ENCODE measurements at regions of chr9 and their contacts with region 1.

Region 1: DNA sequence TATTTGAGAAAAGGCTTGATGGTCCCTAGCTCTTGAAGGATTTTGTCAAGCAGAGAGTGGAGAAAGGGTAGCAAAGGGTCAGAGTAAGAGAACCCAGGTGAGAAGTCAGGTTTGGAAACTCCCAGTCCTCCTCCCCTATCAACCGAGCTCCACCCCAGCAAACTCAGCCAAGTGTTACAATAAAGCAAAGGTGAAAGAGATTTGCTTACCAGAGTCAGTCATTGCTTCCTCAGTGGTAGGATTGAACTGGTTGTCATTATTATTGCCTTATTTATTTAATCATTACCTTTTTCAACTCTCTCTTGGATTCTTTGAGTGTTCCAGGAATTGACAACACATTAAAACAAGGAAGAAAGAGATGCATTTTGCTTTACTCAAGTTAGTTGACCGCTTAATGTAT is 80.5 kb downstream of the RFK start:
- DNase-seq: no peak
- H3K4me3 ChIP-seq: no peak overlapping the region
- H3K27ac ChIP-seq: no peak overlapping the region
- H3K4me1 ChIP-seq: peaks cover 47% of the 10 kb centered on the region
- H3K27me3 ChIP-seq: no peaks in the 10 kb centered on the region
- CTCF ChIP-seq: no peak

Region 2: GRCh38 chr9:76369583-76369982 is 55.8 kb after region 1 on chr9:
- CTCF ChIA-PET with region 1: no interaction called
- POLR2A ChIA-PET with region 1: no interaction called
- intact Hi-C with region 1: loop called (anchors 5 kb)
- DNase-seq: peak; percentile 88
- H3K4me3 ChIP-seq: no peak overlapping the region
- H3K27ac ChIP-seq: peak overlapping the region; percentile 47
- H3K4me1 ChIP-seq: peaks cover 70% of the 10 kb centered on the region
- H3K27me3 ChIP-seq: no peaks in the 10 kb centered on the region
- CTCF ChIP-seq: no peak

Region 3: DNA sequence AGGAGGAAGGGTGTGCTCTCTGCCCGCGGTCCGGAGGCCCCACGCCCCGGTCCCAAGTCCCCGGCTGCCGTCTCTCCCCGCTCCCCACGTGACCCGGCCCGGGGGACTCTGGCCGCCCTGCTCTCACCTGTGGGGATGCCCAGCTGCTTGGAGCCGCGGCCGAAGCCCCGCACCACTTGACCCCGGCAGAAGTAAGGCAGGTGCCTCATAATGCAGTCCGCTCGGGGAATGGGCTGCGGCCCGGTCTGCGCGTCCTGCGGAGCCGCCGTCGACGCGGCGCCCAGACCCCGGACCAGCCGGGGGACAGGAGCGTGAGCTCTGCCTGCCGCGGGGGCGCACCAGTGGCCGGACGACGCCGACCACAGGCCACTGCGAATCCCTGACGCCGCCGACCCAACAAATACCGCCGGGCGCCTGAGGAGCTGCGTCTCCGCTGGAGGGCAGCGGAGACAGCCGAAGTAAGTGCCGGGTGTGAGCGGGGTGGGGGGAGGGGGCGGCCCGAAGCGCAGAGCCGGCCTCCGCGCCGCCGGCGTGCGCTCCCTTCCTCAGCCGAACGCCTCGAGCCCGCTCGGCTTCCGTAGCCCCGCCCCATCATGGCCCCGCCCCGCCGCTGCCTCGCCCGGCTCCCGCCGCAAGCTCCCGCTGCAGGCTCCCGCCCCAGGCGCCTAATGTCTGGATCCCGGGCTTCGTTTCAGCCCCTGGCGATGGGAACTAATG is 80.3 kb after region 1 on chr9 and contains the start of gene RFK:
- CTCF ChIA-PET with region 1: interaction called, 3 read pairs
- POLR2A ChIA-PET with region 1: interaction called, 4 read pairs
- intact Hi-C with region 1: loop called (anchors 1 kb)
- DNase-seq: peak; percentile 82 to 97
- H3K4me3 ChIP-seq: peak within 1 kb of the TSS; percentile 79
- H3K27ac ChIP-seq: peak within 1 kb of the TSS; percentile 85
- H3K4me1 ChIP-seq: peaks cover 22% of the 10 kb centered on the region
- H3K27me3 ChIP-seq: no peaks in the 10 kb centered on the region
- CTCF ChIP-seq: peak; percentile 53; the same call in 1 of the 2 replicates
- total RNA-seq, gene RFK: 20.6 and 24.4 TPM in 2 replicates

Region 4: GRCh38 chr9:76576344-76576743 is 262.6 kb after region 1 on chr9:
- CTCF ChIA-PET with region 1: interaction called, 12 read pairs
- POLR2A ChIA-PET with region 1: no interaction called
- intact Hi-C with region 1: loop called (anchors 10 kb)
- DNase-seq: no peak
- H3K4me3 ChIP-seq: peak overlapping the region; percentile 54; the same call in 1 of the 2 replicates
- H3K27ac ChIP-seq: peak overlapping the region; percentile 88; the same call in 1 of the 2 replicates
- H3K4me1 ChIP-seq: peaks cover 14% of the 10 kb centered on the region
- H3K27me3 ChIP-seq: no peaks in the 10 kb centered on the region
- CTCF ChIP-seq: no peak

Region 5: GRCh38 chr9:76585487-76586389 is 272.0 kb after region 1 on chr9:
- CTCF ChIA-PET with region 1: no interaction called
- POLR2A ChIA-PET with region 1: no interaction called
- intact Hi-C with region 1: loop called (anchors 10 kb)
- DNase-seq: no peak
- H3K4me3 ChIP-seq: no peak overlapping the region
- H3K27ac ChIP-seq: no peak overlapping the region
- H3K4me1 ChIP-seq: no peaks in the 10 kb centered on the region
- H3K27me3 ChIP-seq: no peaks in the 10 kb centered on the region
- CTCF ChIP-seq: no peak